Posterior vena cava (tissue), 2 donors: ENCODE measurements at regions of chr5 and their contacts with region 1.

Region 1: DNA sequence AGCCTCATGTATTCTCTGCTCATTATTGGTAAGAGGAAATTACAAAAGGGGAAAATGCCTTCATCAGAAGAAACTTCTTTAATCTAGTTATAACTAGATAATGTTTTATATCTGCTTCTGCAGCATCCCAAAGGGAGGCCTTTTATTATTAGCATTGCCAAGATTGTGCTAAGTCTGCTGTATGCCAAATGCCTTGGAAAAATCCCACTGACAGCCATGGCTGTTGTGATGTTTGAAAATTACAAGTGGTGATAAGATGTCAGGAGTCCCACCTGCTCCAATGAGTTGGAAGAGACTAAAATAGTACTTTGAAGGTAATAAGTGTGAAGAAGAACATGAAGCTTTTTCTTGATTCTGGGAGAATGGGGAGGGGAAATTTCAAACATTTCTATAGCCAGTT is 345.0 kb downstream of the GABRB2 start:
- DNase-seq: no peak

Region 2: GRCh38 chr5:161165998-161166660 is 35.4 kb before region 1 on chr5:
- intact Hi-C with region 1: loop called in 1 of 2 experiments (anchors 1 kb)
- DNase-seq: no peak